HepG2 (cell line): ENCODE measurements at regions of chr18 and their contacts with region 1.

Region 1: GRCh38 chr18:3151399-3152264 is 68.1 kb downstream of the MYOM1 start:
- DNase-seq: peak; percentile 36
- ATAC-seq: no peak
- H3K4me3 ChIP-seq: peak overlapping the region in 1 of 3 experiments; percentile 24; a peak in 1 of 6 replicates
- H3K27ac ChIP-seq: no peak overlapping the region
- H3K4me1 ChIP-seq: peaks cover 66% of the 10 kb centered on the region
- H3K27me3 ChIP-seq: no peaks in the 10 kb centered on the region
- CTCF ChIP-seq: peak; percentile 63
- EP300 ChIP-seq: no peak
- POLR2A ChIP-seq: no peak
- RAD21 ChIP-seq: peak; percentile 41; the same call in 1 of the 2 replicates

Region 2: GRCh38 chr18:2932247-2933181 is 219.1 kb before region 1 on chr18:
- CTCF ChIA-PET with region 1: interaction called, 4 read pairs
- POLR2A ChIA-PET with region 1: no interaction called
- in situ Hi-C with region 1: loop called (anchors 10 kb)
- intact Hi-C with region 1: loop called (anchors 2 kb)
- DNase-seq: peak; percentile 62
- ATAC-seq: peak; percentile 77
- H3K4me3 ChIP-seq: no peak overlapping the region
- H3K27ac ChIP-seq: peak overlapping the region; percentile 24
- H3K4me1 ChIP-seq: peaks cover 17% of the 10 kb centered on the region
- H3K27me3 ChIP-seq: no peaks in the 10 kb centered on the region
- CTCF ChIP-seq: peak; percentile 69
- EP300 ChIP-seq: no peak
- POLR2A ChIP-seq: peak in 1 of 2 experiments; percentile 14; a peak in 1 of 4 replicates
- RAD21 ChIP-seq: peak; percentile 45; the same call in 1 of the 2 replicates

Region 3: DNA sequence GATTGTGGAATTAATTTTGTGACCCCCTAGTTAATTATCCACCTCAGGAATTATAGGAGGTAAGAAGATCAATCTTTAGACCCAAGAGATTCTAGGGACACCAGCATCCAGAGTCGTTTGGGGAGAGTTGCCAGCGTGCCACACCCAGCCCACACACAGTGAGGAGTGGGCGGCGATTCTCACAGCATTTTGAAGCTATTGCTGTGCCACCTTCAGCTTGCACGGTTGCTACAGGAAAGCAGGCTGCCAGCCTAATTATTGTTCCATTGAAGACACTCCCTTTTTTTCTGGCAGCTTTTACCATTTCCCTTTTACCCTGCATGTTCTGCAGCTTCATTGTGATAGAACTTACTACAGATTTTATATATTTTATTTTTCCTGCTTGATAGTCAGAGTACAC is 82.8 kb after region 1 on chr18:
- CTCF ChIA-PET with region 1: no interaction called
- POLR2A ChIA-PET with region 1: no interaction called
- in situ Hi-C with region 1: no loop called
- intact Hi-C with region 1: loop called (anchors 1 kb)
- DNase-seq: no peak
- ATAC-seq: peak; percentile 8
- H3K4me3 ChIP-seq: peak overlapping the region in 1 of 3 experiments; percentile 8; a peak in 1 of 6 replicates
- H3K27ac ChIP-seq: peak overlapping the region; percentile 95
- H3K4me1 ChIP-seq: peaks cover 66% of the 10 kb centered on the region
- H3K27me3 ChIP-seq: no peaks in the 10 kb centered on the region
- CTCF ChIP-seq: no peak
- EP300 ChIP-seq: no peak
- POLR2A ChIP-seq: no peak
- RAD21 ChIP-seq: no peak